ENCODE measurements at regions of chr11 and their contacts with region 1.

Region 1: DNA sequence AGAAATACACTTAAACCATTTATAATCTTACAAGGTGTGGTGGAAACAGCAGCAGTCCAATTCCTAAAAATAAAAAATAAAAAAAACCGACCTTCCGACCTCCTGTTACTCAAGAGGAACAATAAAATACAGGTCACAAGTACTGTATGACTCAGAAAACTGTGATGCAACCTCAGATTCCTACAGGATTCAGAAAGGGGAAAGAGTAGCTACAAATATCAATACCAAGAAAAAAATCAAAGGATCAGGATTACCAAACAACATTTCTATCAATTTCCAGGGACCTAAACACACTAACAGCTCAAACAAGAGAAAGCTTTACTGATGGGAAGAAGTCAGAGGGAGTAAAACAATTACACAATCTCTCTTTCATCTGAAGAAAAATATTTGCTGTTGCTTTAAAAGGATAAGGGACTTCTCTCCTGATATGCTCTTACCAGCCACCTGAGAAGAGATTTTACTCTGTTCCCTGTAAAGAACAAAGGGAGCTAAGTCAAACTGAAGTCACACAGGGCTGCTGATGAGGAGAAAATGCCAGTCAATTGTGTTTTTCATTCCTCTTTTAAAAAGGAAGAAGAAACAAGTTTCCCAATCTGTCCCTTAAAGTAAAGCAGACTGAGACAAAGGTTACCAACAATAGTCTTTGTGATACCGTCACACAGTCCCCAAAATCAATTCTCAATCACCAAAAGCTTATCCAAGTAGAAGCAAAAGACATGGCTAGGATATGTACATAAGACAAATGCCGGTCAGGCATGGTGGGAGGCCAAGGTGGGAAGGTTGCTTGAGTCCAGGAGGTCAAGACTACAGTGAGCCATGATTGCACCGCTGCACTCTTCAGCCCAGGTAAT is 39.4 kb downstream of the AMBRA1 start:
- DNase-seq: no peak
- ATAC-seq: peak; percentile 21
- H3K4me3 ChIP-seq: no peak overlapping the region
- H3K27ac ChIP-seq: peak overlapping the region; percentile 52
- H3K4me1 ChIP-seq: peaks cover 23% of the 10 kb centered on the region
- H3K27me3 ChIP-seq: no peaks in the 10 kb centered on the region
- CTCF ChIP-seq: no peak
- EP300 ChIP-seq: no peak
- POLR2A ChIP-seq: no peak
- RAD21 ChIP-seq: no peak

Region 2: DNA sequence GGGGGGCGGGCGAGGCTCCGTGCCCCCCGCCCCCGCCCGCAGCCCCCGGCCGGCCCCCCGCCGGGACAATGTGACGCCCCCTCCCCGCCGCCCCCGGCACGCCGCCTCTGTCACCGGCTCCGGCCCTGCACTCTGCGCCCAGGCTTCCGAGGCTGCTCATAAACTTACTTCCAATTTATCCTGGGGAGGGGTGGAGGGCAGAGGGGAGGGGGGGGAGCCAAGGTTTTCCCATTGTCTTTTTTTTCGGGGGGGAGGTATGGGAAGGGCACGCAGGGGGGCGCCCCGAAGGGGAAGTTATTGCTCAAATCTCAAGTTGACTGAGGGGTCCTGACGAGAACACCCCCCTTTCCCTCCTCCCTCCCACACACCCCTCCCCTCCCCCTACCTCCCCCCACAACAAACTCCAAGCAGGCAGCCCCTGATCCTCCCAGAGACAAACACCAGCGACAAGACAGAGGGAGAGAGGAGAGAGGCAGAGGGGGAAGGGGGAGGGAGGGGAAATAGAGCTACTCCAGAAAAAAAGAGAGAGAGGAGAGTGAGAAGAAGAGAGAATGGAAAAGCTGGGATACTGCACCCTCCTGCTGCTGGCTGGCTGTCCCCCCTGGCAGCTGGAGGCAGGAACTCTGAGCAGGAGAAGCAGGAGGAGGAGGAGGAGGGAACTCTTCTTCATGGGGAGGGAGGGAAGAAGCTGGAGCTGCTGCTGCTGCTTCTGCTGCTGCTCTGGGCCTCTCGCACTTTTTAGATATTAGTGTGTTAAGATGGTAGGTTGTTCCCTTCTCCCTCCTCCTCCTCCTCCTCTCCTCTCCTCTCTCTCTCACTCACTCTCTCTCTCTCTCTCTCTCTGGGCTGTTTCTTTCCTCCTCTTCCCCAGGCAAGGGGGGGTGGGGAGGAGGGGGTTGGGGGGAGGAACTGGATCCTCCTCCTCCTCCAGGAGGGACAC is 433.8 kb before region 1 on chr11:
- CTCF ChIA-PET with region 1: no interaction called
- POLR2A ChIA-PET with region 1: no interaction called
- RAD21 ChIA-PET with region 1: no interaction called
- SMC1A ChIA-PET with region 1: no interaction called
- in situ Hi-C with region 1: no loop called
- intact Hi-C with region 1: no loop called
- DNase-seq: no peak
- ATAC-seq: peak; percentile 22
- H3K4me3 ChIP-seq: peak overlapping the region; percentile 81
- H3K27ac ChIP-seq: peak overlapping the region; percentile 75
- H3K4me1 ChIP-seq: no peaks in the 10 kb centered on the region
- H3K27me3 ChIP-seq: no peaks in the 10 kb centered on the region
- CTCF ChIP-seq: no peak
- EP300 ChIP-seq: no peak
- POLR2A ChIP-seq: no peak
- RAD21 ChIP-seq: no peak

Region 3: DNA sequence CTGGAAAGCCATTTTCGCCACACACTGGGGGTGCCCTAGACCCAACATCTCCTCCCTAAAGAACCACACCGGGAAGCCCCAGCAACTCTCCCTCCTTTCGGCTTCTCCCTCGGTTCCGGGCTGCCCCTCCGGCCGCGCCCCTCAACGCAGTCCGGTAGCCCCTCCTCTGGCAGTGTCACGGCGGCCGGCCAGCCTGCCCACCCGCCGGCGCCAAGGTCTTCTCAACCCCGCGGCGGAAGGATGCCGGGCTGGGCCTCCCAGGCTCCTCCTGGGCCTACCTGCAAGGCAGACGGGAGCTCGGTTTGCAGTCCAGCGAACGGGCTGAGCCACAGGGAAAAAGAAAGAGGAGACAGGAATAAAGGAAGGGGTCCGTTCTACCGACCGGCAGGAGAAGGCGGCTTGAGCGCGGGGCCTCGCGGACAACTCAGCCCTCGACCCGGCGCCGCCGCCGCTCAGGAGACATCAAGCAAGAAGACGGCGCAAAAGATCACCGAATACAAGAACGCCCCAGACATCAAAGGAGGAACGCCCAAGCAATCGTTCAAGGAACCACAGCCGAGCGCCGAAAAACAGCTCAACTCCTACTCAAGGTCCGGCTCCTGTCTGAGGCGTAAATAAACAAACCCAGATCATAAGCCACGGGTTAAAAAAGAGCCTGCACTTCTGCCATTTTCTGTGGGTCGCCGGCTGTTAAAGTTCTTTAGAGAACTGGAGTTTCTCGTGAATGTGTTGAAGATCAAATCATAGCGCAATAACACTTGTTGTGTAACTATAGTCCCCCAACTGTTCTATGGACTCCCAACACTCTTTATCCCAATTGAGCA is 39.3 kb after region 1 on chr11 and contains the start of gene AMBRA1:
- CTCF ChIA-PET with region 1: no interaction called
- POLR2A ChIA-PET with region 1: interaction called, 6 read pairs
- RAD21 ChIA-PET with region 1: interaction called, 4 read pairs
- SMC1A ChIA-PET with region 1: interaction called, 6 read pairs
- in situ Hi-C with region 1: no loop called
- intact Hi-C with region 1: loop called (anchors 2 kb)
- DNase-seq: peak; percentile 90
- ATAC-seq: peak; percentile 90
- H3K4me3 ChIP-seq: peak within 1 kb of the TSS; percentile 92
- H3K27ac ChIP-seq: peak within 1 kb of the TSS; percentile 61
- H3K4me1 ChIP-seq: no peaks in the 10 kb centered on the region
- H3K27me3 ChIP-seq: no peaks in the 10 kb centered on the region
- CTCF ChIP-seq: no peak
- EP300 ChIP-seq: no peak; a peak in 1 of 4 replicates
- POLR2A ChIP-seq: peak; percentile 85
- RAD21 ChIP-seq: no peak
- polyA plus RNA-seq, gene AMBRA1: 0.57 to 0.58 TPM

Region 4: DNA sequence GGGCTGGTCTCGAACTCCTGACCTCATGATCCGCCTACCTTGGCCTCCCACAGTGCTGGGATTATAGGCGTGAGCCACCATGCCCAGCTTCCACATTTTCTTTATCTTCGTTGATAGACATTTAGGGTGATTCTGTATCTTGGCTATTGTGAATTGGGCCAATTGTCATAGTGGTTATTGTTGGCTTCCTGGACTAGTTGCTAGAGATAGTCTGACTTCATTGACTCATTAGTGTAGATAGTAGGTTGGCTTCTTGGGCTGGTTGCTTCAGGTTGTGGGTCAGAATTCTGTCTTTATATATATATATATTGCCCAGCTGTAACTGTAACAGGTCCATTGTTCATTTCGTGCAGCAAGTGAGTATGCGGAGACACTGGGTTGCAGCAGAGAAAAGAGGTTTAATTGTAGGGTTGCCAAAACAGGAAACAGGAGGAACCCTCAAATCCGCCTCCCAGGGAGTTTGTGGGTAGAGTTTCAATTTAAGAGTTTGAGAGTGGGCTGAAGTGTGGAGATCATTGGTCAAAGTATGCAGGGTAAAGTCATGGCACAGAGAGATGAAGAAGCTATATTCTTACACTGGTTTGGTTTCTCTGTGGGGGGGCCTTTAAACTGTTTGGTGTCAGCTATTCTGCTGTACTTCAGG is 84.9 kb after region 1 on chr11:
- CTCF ChIA-PET with region 1: no interaction called
- POLR2A ChIA-PET with region 1: no interaction called
- RAD21 ChIA-PET with region 1: no interaction called
- SMC1A ChIA-PET with region 1: no interaction called
- in situ Hi-C with region 1: no loop called
- intact Hi-C with region 1: no loop called
- DNase-seq: no peak
- ATAC-seq: no peak
- H3K4me3 ChIP-seq: no peak overlapping the region
- H3K27ac ChIP-seq: no peak overlapping the region
- H3K4me1 ChIP-seq: no peaks in the 10 kb centered on the region
- H3K27me3 ChIP-seq: no peaks in the 10 kb centered on the region
- CTCF ChIP-seq: no peak
- EP300 ChIP-seq: no peak
- POLR2A ChIP-seq: no peak
- RAD21 ChIP-seq: no peak